ENCODE measurements at regions of chr6 and their contacts with region 1.

Region 1: DNA sequence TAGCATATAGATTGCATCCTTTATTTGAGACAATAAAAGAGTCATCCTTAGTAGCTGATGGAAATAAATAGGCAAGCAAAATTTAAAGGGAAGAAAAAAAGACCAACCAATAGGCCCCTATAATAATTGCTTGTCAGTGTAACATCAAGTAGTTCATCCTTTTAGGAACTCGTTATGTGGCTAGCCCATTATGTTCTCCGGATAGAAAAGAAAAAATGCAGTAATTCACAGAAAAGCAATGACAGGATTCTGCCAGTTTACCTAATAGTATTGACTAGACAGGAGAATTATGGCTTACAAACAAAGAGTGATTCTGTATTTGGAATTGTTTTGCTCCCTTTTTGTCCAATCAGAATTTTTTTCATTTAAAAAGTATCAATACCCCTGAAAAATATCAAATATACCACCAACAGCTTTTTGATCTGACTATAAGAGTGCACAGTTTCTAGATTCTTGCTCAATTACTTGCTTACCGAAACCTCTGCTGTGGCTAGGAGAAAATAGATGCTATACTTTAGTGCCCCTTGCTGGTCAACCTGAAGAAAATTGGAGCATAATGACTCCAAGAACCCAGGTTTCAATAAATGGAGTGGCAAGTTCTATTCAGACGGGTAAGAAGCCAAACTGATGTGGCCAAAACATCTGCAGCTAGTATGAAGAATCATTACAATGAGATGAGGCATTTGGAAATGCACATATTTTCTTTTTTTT is 91.5 kb upstream of the SASH1 start:
- DNase-seq: no peak
- H3K4me3 Mint-ChIP-seq: no peak overlapping the region
- H3K27ac Mint-ChIP-seq: no peak overlapping the region
- H3K4me1 Mint-ChIP-seq: no peaks in the 10 kb centered on the region
- H3K27me3 Mint-ChIP-seq: peaks cover 2% of the 10 kb centered on the region

Region 2: DNA sequence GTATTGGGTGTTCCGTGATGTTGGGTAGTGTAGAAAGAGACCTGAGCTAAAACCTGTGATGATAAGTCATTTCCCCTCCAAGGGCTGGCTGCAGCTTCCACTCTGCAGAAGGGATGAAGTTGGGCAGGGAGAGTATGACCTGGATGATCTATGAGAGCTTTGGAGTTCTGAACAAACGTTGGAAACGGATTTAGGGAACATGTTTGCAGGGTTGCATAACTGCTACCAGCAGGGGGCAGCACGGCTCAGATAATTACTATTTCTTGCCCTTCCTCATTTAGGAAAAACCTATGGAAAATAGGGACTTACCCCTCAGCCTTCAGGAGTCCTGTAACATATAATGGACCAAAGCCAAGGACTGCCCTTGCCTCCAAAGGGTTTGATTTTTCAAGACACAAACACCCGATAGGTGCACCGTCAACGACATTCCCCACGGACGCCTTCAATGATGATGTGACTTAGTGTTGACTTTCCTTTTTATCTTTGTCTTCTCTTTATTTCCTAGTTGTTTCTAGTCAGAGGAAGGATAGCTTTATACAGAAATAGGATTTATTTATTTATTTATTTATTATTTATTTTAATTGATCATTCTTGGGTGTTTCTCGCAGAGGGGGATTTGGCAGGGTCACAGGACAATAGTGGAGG is 73.4 kb before region 1 on chr6:
- intact Hi-C with region 1: loop called (anchors 1 kb)
- DNase-seq: no peak
- H3K4me3 Mint-ChIP-seq: no peak overlapping the region
- H3K27ac Mint-ChIP-seq: no peak overlapping the region
- H3K4me1 Mint-ChIP-seq: no peaks in the 10 kb centered on the region
- H3K27me3 Mint-ChIP-seq: peaks cover 3% of the 10 kb centered on the region

Region 3: DNA sequence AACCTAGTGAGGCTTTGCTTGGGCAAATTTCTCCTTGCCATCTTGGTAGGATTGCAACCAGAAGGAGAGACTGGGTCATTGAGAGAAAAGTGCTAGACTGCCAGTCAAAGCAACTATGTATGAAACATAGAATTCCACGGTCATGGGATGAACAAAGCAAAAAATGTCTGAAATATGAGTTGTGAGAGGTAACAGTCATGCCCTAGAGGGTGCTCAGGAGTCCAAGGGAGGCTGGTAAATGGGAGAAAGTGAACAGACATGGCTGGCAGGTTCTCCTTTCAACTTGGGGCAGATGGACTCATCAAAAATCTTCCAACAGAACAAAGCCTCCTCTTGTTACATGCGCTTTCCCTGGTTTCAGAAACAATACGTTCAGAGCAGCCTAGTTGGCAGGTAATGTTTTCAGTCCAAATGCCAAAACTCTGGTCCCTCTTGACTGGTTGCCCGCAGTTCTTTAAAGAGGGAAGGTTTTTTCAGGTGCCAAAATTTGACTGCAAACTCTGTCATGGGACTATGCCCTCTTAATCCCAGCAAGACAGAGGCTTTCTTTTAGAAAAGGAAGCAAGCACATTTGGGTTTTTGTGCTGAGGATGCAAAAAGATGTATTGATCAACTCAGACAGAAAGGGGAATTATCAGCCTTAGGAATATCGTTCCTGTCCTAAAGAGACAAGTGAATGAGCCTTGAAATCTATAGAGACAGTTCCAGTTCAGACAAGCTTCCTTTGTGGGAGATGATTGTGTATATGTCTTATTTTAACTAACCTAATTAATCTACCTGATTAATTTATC is 23.0 kb after region 1 on chr6:
- intact Hi-C with region 1: no loop called
- DNase-seq: no peak
- H3K4me3 Mint-ChIP-seq: no peak overlapping the region
- H3K27ac Mint-ChIP-seq: no peak overlapping the region
- H3K4me1 Mint-ChIP-seq: no peaks in the 10 kb centered on the region
- H3K27me3 Mint-ChIP-seq: no peaks in the 10 kb centered on the region